ENCODE measurements at regions of chr6 and their contacts with region 1.

Region 1: DNA sequence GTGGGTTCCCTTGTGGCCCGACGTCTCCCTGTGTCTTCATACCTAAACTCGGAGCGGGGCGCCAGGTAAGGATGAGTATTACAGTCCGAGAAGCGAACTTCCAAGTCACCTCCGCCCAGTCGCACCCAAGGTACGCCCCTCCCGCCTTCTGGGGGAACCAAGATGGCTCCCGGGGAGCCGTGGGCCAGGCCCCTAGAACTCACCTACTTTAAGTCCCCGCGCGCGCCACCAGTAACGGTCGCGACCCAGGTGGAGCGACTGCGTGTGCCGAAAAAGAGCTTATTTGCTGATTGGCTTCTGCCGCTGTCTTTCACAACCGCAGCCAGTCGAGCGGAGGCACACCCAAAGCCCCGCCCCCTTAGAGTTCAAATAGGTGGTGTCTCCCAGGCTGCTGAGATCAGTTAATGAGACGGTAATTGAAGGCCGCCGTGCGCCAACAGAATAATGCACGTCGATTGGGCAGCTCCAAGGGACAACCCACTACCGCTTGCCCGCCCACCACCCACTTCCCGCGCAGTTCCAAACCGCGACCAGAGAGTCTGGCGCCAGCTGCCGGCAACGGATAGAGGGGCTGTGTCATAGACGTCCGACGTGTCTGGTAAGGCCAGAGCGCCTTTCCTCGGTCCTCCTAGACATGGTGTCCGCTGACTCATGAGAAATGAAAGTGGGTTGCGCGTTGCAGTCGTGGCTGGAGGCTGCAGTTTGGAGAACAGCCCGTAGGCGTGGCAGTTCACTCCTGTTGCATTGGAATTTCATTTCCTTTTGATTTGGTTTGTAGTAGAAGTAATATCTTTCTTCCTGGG is at the start of gene MDC1:
- DNase-seq: peak; percentile 100
- H3K4me3 ChIP-seq: peak within 1 kb of the TSS; percentile 64 to 94 (median 84)
- H3K27ac ChIP-seq: peak within 1 kb of the TSS; percentile 86 to 94
- H3K4me1 ChIP-seq: peaks cover 17 to 48% (median 32%) of the 10 kb centered on the region in 4 experiments
- H3K27me3 ChIP-seq: no peaks in the 10 kb centered on the region

Region 2: GRCh38 chr6:30483677-30484279 is 233.5 kb before region 1 on chr6:
- CTCF ChIA-PET with region 1: interaction called, 20 read pairs
- POLR2A ChIA-PET with region 1: no interaction called
- DNase-seq: peak; percentile 68 to 79 (median 71)
- H3K4me3 ChIP-seq: no peak overlapping the region
- H3K27ac ChIP-seq: no peak overlapping the region
- H3K4me1 ChIP-seq: peaks cover 7 to 28% (median 19%) of the 10 kb centered on the region in 4 experiments
- H3K27me3 ChIP-seq: peaks cover 4 to 42% (median 26%) of the 10 kb centered on the region in 5 experiments

Region 3: DNA sequence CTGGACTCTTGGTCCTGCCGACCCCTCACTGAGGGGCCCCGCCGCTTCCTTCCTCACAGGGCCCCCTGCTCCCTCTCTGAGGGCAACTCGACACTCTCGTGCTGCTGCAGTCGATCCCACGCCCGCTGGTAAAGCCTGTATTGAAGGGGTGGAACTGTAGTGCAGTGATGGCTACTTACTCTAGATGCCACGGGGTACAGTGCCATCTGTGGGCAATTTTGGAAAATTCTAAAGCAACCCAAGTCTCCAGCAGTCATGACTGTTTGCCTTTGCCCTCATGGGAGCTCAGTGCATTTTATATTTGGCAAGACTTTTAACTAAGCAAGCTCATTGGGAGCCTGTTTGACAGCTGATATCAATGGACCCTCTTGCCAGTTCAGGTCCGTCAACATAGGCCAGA is 76.8 kb before region 1 on chr6:
- CTCF ChIA-PET with region 1: interaction called, 17 read pairs
- POLR2A ChIA-PET with region 1: no interaction called
- DNase-seq: peak in 2 of 3 donors; percentile 48 to 57
- H3K4me3 ChIP-seq: no peak overlapping the region
- H3K27ac ChIP-seq: no peak overlapping the region
- H3K4me1 ChIP-seq: peaks cover 4 to 44% (median 34%) of the 10 kb centered on the region in 4 experiments
- H3K27me3 ChIP-seq: no peaks in the 10 kb centered on the region

Region 4: GRCh38 chr6:30672445-30673253 is 44.6 kb before region 1 on chr6 and contains the start of gene DHX16:
- CTCF ChIA-PET with region 1: interaction called, 622 read pairs
- POLR2A ChIA-PET with region 1: interaction called, 9 read pairs
- DNase-seq: peak; percentile 96 to 97 (median 97)
- H3K4me3 ChIP-seq: peak within 1 kb of the TSS; percentile 76 to 99 (median 94)
- H3K27ac ChIP-seq: peak within 1 kb of the TSS; percentile 61 to 83
- H3K4me1 ChIP-seq: peaks cover 3 to 20% (median 17%) of the 10 kb centered on the region in 4 experiments
- H3K27me3 ChIP-seq: no peaks in the 10 kb centered on the region

Region 5: DNA sequence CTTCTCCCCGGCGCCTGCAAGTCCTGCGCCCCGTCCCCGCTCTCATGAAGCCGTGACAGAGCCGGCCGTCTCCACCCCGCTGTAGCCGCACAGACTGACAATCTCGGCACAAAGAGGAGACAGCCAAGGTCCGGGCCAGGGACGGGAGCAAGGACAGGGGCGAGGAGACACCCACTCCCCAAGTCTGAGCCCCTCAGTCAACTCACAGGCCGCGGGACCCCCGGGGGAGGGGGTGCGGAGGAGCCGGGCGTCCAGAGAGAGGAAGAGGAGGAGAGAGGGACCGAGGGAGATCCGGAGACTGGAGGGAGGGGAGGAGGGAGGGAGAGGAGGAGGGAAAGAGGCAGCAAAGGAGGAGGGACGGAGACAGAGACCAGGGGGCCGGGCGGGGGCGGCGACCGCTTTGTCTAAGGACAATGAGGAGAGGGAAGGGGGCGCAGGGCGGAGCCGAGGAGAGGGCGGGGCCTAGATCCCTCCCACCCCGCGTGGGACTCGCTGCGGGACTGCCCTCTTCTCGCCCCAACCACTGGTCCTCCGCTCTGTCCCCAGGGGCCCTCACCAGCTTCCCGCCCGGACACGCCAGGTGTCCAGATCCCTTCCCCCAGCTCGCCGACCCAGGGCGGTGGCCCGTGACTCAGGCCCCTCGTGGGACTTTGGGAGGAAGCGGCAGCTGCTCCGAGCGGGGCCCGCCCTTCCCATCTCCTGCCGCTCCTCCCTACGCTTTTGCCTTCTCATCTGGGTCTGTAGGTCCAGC is 30.2 kb before region 1 on chr6:
- CTCF ChIA-PET with region 1: interaction called, 622 read pairs
- POLR2A ChIA-PET with region 1: interaction called, 56 read pairs
- DNase-seq: peak; percentile 59 to 84 (median 78)
- H3K4me3 ChIP-seq: peak overlapping the region; percentile 85 to 96 (median 89)
- H3K27ac ChIP-seq: peak overlapping the region; percentile 66 to 94
- H3K4me1 ChIP-seq: peaks cover 16 to 77% (median 73%) of the 10 kb centered on the region in 4 experiments
- H3K27me3 ChIP-seq: no peaks in the 10 kb centered on the region

Measured in common myeloid progenitor, CD34-positive (primary cell).